ENCODE measurements at regions of chr6 and their contacts with region 1.

Region 1: DNA sequence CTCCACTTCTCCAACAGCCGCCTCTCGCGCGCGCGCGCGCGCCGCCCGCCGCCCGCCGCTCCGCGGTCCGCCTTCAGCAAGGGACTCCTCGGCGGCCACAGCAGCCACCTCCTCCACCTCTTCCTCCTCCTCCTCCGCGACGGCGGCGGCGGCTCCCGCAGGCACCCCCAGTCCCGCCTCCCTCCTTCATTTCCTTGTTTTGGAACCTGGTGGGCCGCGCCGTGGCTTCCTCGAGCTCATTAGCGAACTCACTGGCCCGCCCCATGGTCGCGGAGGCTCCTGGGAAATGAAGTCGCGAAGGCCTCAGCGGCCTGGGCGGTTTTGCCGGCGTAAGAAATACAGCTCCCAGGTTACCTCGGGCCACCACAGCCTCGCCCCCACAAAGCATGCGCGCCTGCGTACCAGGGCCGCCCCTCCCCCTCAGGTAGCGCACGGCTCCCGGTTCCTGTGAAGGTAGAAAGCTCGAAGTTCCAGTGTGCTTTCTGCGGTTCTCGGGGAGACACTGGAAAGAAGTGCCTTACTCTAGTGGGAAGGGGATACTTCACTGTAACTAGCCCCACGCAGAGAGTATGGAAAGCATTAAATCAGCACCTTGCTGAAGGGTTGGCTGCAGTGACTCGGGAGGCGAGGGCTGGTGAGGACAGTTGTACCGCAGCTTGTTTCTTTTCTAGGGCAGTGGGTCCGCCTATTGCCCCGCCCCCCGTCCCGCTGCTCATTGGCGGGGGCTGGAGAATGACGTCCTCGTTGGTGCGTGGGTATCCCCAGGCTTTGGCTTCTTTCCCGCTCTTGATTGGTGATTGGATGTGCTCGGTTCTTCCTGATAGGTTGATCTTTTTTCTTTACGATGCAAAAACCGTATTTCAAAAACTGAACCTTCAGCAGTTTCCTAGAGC is at the start of gene CDK19:
- DNase-seq: peak; percentile 99 to 100
- H3K4me3 ChIP-seq: peak within 1 kb of the TSS; percentile 89 to 96 (median 94)
- H3K27ac ChIP-seq: peak within 1 kb of the TSS; percentile 87 to 98 (median 95)
- H3K4me1 ChIP-seq: peaks cover 0 to 39% (median 15%) of the 10 kb centered on the region in 4 donors
- H3K27me3 ChIP-seq: no peaks in the 10 kb centered on the region
- CTCF ChIP-seq: no peak
- EP300 ChIP-seq: no peak
- POLR2A ChIP-seq: peak in 2 of 4 donors; percentile 64 to 96
- total RNA-seq, gene CDK19: 5.5 to 23.5 (median 13.4) TPM

Region 2: DNA sequence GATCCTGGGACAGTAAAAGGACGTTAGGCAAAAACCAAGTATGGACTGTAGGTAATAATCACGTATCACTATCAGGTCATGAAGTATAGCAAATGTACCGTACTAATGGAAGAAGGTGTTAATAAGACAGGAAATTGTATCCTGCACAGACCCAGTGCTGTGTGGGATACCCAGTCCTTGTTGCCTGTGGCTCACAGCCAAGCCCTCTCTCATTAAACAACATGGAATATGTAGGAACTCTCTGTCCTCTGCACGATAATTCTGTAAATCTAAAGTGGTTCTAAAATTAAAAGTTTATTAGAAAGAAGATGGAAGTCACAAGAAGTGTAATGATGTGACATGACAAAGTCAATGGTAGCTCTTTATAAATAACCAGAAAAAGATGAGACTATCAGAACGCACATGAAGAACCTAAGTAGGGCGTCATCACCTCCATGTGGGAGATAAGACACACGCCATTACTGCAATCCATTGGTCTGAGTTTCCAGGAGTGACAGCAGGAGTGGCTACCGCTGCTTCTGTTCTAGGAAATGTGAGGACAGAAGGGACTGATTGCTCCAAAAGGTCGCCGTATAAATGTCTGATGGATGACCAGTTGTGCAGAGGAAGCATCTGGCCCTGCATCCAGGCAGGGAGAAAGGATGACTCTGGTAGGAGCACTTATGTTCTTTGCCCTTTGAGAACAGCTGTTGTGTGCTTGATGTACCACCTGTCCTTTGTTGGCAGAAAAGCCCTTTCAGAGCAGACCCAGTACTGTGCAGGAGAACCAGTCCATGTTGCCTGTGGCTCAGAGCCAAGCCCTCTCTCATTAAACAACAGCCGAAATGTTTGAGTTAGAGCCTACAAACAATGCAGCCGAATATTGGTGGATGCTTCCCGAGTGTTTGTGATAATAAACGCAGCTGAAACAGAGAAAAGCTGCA is 998.8 kb before region 1 on chr6:
- intact Hi-C with region 1: no loop called
- DNase-seq: peak in 1 of 2 donors; percentile 61
- H3K4me3 ChIP-seq: no peak overlapping the region
- H3K27ac ChIP-seq: no peak overlapping the region
- H3K4me1 ChIP-seq: no peaks in the 10 kb centered on the region
- H3K27me3 ChIP-seq: no peaks in the 10 kb centered on the region
- CTCF ChIP-seq: no peak
- EP300 ChIP-seq: no peak
- POLR2A ChIP-seq: no peak

Region 3: DNA sequence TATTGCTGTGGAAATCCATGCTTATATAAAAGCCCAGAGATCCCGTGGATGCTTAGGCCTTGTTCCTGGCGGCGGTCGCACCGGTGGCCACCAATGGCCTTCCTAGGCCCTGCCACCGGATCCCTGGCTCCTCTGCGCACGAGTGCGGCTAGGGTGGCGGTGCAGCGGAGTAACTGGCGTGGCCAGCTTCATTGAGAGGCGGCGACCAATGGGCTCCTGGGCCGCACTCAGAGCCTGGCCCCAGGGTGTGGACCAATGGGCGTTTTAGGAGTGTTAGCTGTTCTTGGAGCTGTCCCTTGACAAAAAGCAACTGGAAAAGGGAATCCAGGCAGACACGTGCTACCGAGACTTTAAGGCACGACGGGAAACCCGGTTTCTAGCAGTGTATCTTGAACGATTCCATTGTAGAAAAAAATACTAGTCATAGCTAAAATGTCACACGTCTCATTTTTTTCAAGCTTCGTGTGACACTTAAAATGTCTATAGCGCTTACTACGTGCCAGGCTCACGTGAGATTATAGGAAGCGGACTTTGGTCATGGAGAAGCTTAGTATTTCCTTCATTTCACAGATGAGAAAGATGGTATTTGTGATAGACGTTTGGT is 60.8 kb after region 1 on chr6:
- intact Hi-C with region 1: loop called (anchors 5 kb)
- DNase-seq: peak; percentile 90 to 95
- H3K4me3 ChIP-seq: peak overlapping the region; percentile 70 to 96 (median 90)
- H3K27ac ChIP-seq: peak overlapping the region; percentile 92 to 98 (median 98)
- H3K4me1 ChIP-seq: peaks cover 36 to 56% (median 47%) of the 10 kb centered on the region in 4 donors
- H3K27me3 ChIP-seq: no peaks in the 10 kb centered on the region
- CTCF ChIP-seq: no peak
- EP300 ChIP-seq: no peak
- POLR2A ChIP-seq: peak in 2 of 4 donors; percentile 62 to 72

Region 4: DNA sequence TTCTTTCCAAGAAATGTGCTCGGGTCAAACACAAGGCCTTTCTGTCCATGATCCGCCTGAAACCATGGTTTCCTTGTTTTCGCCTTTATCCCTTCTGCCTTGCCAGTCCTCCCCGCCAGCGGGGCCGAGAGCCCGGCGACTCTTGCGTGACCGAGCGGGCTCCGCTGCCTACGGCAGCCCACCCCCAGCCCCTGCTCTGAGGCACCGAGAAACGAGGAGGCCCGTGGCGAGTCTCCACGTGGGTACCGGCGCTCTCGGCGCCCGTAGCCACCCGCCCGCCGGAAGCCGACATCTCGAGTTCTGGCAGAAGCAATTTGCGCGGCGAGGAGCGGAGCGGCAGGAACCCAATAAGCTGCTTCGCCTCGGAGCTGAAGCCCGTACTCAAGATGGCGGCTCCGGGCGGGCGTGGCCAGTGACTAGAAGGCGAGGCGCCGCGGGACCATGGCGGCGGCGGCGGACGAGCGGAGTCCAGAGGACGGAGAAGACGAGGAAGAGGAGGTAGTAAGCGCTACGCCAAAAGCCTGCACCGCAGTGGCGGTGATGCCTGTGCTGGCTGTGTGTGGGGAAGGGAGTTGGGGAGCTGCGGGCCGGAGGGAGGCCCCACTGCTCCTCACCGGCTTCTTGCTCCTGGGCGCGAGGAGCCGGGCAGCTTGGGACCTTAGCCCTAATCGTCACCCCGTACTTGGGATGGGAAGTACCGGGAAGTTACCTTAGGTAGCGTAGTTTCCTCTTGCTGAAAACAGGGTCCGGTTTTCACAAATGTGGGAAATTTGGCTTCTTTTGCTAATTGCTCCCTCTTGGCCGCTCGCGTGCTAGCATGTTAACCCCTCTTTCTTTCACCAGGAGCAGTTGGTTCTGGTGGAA is 143.1 kb after region 1 on chr6 and contains the start of gene GTF3C6:
- intact Hi-C with region 1: loop called (anchors 10 kb)
- DNase-seq: peak; percentile 94 to 98
- H3K4me3 ChIP-seq: peak within 1 kb of the TSS; percentile 65 to 88 (median 74)
- H3K27ac ChIP-seq: peak within 1 kb of the TSS; percentile 89 to 95 (median 92)
- H3K4me1 ChIP-seq: peaks cover 7 to 22% (median 14%) of the 10 kb centered on the region in 4 donors
- H3K27me3 ChIP-seq: no peaks in the 10 kb centered on the region
- CTCF ChIP-seq: no peak
- EP300 ChIP-seq: no peak
- POLR2A ChIP-seq: peak in 2 of 4 donors; percentile 13 to 62
- total RNA-seq, gene GTF3C6: 5.5 to 68.8 (median 15.6) TPM

Measured in stomach (tissue), 19 donors.